Naive thymus-derived CD4-positive, alpha-beta T cell (primary cell): ENCODE measurements at regions of chr1 and their contacts with region 1.

Region 1: DNA sequence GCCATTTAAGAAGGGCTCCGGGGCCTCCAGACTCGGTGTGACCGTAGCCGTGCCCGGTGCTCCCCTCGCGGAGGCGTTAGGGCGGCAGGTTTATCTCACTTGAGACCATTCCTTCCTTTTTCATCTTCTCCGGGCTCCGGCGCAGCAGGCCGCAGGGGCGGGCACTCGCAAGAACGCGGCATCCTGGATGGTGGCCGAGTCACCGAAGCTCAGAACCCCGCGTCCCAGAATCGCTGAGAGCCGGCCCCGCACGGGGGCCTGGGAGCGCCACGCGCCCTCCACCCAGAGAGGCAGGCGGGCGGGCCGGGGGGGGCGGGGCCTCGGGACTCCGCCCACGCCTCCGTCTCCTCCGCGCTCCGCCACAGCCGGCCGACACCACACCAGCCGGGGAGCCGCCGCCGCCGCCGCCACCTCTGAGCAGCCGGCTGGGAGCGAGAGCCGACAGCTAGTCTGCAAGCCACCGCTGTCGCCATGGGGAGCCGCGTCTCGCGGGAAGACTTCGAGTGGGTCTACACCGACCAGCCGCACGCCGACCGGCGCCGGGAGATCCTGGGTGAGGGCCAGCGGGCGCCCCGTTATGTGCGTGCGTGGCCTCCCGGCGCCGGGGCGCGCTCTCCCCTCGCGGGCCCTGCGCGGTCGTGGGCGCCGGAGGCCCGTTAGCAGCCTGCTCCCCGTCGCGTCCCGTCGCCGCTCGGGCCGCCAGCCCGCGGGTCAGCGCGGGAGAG is at the start of gene DEGS1:
- DNase-seq: peak; percentile 77 to 86 (median 84)
- ATAC-seq: peak; percentile 91
- H3K4me3 ChIP-seq: peak within 1 kb of the TSS; percentile 76
- H3K4me3 Mint-ChIP-seq: peak within 1 kb of the TSS; percentile 78 to 95 (median 90)
- H3K27ac ChIP-seq: peak within 1 kb of the TSS; percentile 92
- H3K27ac Mint-ChIP-seq: peak within 1 kb of the TSS; percentile 90 to 96 (median 93)
- H3K4me1 ChIP-seq: peaks cover 20 to 28% of the 10 kb centered on the region in 2 donors
- H3K4me1 Mint-ChIP-seq: peaks cover 35 to 56% (median 53%) of the 10 kb centered on the region in 7 donors
- H3K27me3 ChIP-seq: no peaks in the 10 kb centered on the region
- H3K27me3 Mint-ChIP-seq: no peaks in the 10 kb centered on the region
- total RNA-seq, gene DEGS1: 35.4 to 86.0 (median 38.3) TPM

Region 2: GRCh38 chr1:224113918-224114786 is 68.9 kb before region 1 on chr1 and contains the start of gene FBXO28:
- CTCF ChIA-PET with region 1: no interaction called
- POLR2A ChIA-PET with region 1: interaction called, 3 read pairs
- intact Hi-C with region 1: loop called (anchors 1 kb)
- DNase-seq: peak; percentile 69 to 94 (median 88)
- ATAC-seq: peak; percentile 96
- H3K4me3 ChIP-seq: peak within 1 kb of the TSS; percentile 92
- H3K4me3 Mint-ChIP-seq: peak within 1 kb of the TSS; percentile 89 to 96 (median 92)
- H3K27ac ChIP-seq: peak within 1 kb of the TSS; percentile 92
- H3K27ac Mint-ChIP-seq: peak within 1 kb of the TSS; percentile 89 to 96 (median 94)
- H3K4me1 ChIP-seq: peaks cover 4 to 14% of the 10 kb centered on the region in 2 donors
- H3K4me1 Mint-ChIP-seq: peaks cover 11 to 41% (median 30%) of the 10 kb centered on the region in 7 donors
- H3K27me3 ChIP-seq: no peaks in the 10 kb centered on the region
- H3K27me3 Mint-ChIP-seq: peaks cover 0 to 26% (median 11%) of the 10 kb centered on the region in 5 donors
- total RNA-seq, gene FBXO28: 25.2 to 37.8 (median 26.5) TPM

Region 3: GRCh38 chr1:224168859-224169380 is 14.1 kb before region 1 on chr1:
- CTCF ChIA-PET with region 1: interaction called, 5 read pairs
- POLR2A ChIA-PET with region 1: interaction called, 28 read pairs
- intact Hi-C with region 1: loop called (anchors 1 kb)
- DNase-seq: peak in 7 of 9 donors; percentile 56 to 80 (median 76)
- ATAC-seq: peak; percentile 93
- H3K4me3 ChIP-seq: no peak overlapping the region
- H3K4me3 Mint-ChIP-seq: peak overlapping the region; percentile 59 to 80 (median 70)
- H3K27ac ChIP-seq: no peak overlapping the region
- H3K27ac Mint-ChIP-seq: peak overlapping the region; percentile 43 to 85 (median 77)
- H3K4me1 ChIP-seq: peaks cover 17 to 29% of the 10 kb centered on the region in 2 donors
- H3K4me1 Mint-ChIP-seq: peaks cover 33 to 38% (median 36%) of the 10 kb centered on the region in 7 donors
- H3K27me3 ChIP-seq: no peaks in the 10 kb centered on the region
- H3K27me3 Mint-ChIP-seq: peaks cover 0 to 11% (median 0%) of the 10 kb centered on the region in 5 donors

Region 4: DNA sequence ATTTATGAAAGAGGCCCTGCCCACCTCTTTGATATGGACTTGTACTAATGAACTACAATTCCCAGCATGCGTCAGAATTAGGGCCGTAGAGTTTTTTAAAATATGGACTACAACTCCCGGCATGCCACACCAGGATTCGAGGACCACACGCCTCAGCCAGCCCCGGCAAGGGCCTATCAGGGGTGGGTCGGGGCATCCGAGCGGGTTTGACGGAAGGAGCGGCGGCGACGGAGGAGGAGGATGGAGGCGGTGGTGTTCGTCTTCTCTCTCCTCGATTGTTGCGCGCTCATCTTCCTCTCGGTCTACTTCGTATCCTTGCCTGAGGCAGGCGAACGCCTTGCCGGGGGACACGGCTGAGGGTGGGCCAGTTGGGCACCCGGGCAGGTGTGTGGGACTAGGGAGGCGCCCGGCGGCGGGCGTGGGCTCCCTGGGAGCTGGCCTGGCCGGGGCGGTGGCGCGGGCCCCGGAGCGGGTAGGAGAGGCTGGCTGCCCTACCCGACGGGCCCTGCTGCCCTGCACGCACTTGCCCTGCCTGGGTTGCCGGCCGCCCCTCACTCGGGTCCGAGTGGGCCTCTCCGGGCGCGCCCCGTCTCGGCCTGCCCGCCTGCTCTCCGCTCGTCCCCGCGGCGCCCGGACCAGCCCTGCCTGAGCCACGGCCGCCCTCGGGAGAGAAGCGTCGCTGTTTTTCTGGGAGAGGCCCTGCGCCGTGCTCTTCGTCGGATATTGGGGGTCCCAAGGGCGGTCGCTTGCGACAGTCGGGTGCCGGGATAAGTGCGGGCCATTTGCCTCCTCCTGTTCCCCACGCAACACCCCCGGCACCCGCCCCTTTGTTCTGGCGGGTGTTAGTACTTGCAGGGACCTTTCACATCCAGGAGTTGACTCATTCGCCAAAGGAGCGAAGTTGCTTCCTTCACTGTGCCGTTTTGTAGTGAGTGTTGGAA is 173.9 kb after region 1 on chr1 and contains the start of gene CNIH4:
- CTCF ChIA-PET with region 1: no interaction called
- POLR2A ChIA-PET with region 1: interaction called, 4 read pairs
- intact Hi-C with region 1: loop called (anchors 1 kb)
- DNase-seq: peak; percentile 79 to 95 (median 92)
- ATAC-seq: peak; percentile 99
- H3K4me3 ChIP-seq: peak within 1 kb of the TSS; percentile 67
- H3K4me3 Mint-ChIP-seq: peak within 1 kb of the TSS; percentile 87 to 98 (median 94)
- H3K27ac ChIP-seq: peak within 1 kb of the TSS; percentile 83
- H3K27ac Mint-ChIP-seq: peak within 1 kb of the TSS; percentile 71 to 95 (median 89)
- H3K4me1 ChIP-seq: peaks cover 16 to 27% of the 10 kb centered on the region in 2 donors
- H3K4me1 Mint-ChIP-seq: peaks cover 23 to 58% (median 44%) of the 10 kb centered on the region in 7 donors
- H3K27me3 ChIP-seq: no peaks in the 10 kb centered on the region
- H3K27me3 Mint-ChIP-seq: no peaks in the 10 kb centered on the region
- total RNA-seq, gene CNIH4: 28.1 to 42.0 (median 39.8) TPM

Region 5: DNA sequence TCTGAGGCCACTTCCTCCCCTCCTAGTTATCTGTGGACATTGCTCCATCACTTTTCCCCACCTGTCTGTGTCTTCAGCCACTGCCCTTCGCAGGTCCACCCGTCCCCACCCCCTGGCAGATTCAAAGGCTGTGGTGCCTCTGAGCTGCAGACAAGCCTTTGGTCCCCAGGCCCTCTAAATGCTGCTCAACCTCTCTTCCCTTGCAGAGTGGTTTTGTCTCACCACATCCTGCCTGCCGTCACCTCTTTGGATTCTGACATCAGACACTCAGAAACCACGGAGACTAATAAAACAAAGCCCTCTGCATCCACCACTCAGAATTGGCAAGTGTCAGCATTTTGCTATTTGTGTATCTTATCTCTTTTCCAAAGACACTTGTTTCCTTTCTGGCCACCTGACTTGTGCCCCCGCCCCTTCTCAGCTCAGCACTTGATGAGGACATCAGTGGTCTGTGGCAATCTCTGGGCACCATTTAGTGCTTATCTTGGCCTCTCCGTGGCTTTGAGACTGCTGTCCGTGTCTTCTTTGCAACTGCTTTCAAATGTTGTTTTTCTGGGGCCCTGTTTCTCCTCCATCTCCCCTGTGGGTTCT is 440.8 kb after region 1 on chr1:
- CTCF ChIA-PET with region 1: no interaction called
- POLR2A ChIA-PET with region 1: no interaction called
- intact Hi-C with region 1: loop called in 1 of 2 experiments (anchors 5 kb)
- DNase-seq: peak in 8 of 9 donors; percentile 70 to 89 (median 83)
- ATAC-seq: peak; percentile 93
- H3K4me3 ChIP-seq: peak overlapping the region; percentile 40
- H3K4me3 Mint-ChIP-seq: peak overlapping the region; percentile 58 to 80 (median 72)
- H3K27ac ChIP-seq: no peak overlapping the region
- H3K27ac Mint-ChIP-seq: peak overlapping the region; percentile 66 to 95 (median 90)
- H3K4me1 ChIP-seq: peaks cover 18 to 25% of the 10 kb centered on the region in 2 donors
- H3K4me1 Mint-ChIP-seq: peaks cover 22 to 47% (median 31%) of the 10 kb centered on the region in 7 donors
- H3K27me3 ChIP-seq: no peaks in the 10 kb centered on the region
- H3K27me3 Mint-ChIP-seq: peaks cover 40 to 45% (median 44%) of the 10 kb centered on the region in 5 donors